CD8-positive, alpha-beta T cell (primary cell): ENCODE measurements at regions of chr12 and their contacts with region 1.

Region 1: GRCh38 chr12:120971299-120972179 is 6.8 kb upstream of the HNF1A start:
- DNase-seq: peak in 7 of 9 experiments; percentile 11 to 78 (median 27)
- ATAC-seq: peak; percentile 95
- H3K4me3 ChIP-seq: no peak overlapping the region
- H3K4me3 Mint-ChIP-seq: no peak overlapping the region
- H3K27ac ChIP-seq: no peak overlapping the region
- H3K27ac Mint-ChIP-seq: no peak overlapping the region
- H3K4me1 ChIP-seq: no peaks in the 10 kb centered on the region
- H3K4me1 Mint-ChIP-seq: peaks cover 5% of the 10 kb centered on the region
- H3K27me3 ChIP-seq: no peaks in the 10 kb centered on the region
- H3K27me3 Mint-ChIP-seq: no peaks in the 10 kb centered on the region
- CTCF ChIP-seq: peak; percentile 69

Region 2: GRCh38 chr12:120356567-120357030 is 614.9 kb before region 1 on chr12:
- CTCF ChIA-PET with region 1: interaction called, 3 read pairs
- POLR2A ChIA-PET with region 1: no interaction called
- intact Hi-C with region 1: loop called in 1 of 2 experiments (anchors 10 kb)
- DNase-seq: peak; percentile 39 to 83 (median 75)
- ATAC-seq: peak; percentile 96
- H3K4me3 ChIP-seq: no peak overlapping the region
- H3K4me3 Mint-ChIP-seq: no peak overlapping the region
- H3K27ac ChIP-seq: no peak overlapping the region
- H3K27ac Mint-ChIP-seq: no peak overlapping the region
- H3K4me1 ChIP-seq: no peaks in the 10 kb centered on the region
- H3K4me1 Mint-ChIP-seq: peaks cover 2% of the 10 kb centered on the region
- H3K27me3 ChIP-seq: peaks cover 0 to 2% of the 10 kb centered on the region in 2 experiments
- H3K27me3 Mint-ChIP-seq: peaks cover 32% of the 10 kb centered on the region
- CTCF ChIP-seq: peak; percentile 89

Region 3: GRCh38 chr12:120710031-120710804 is 261.3 kb before region 1 on chr12 and contains the start of gene UNC119B:
- CTCF ChIA-PET with region 1: interaction called, 3 read pairs
- POLR2A ChIA-PET with region 1: no interaction called
- intact Hi-C with region 1: loop called in 1 of 2 experiments (anchors 5 kb)
- DNase-seq: peak; percentile 38 to 85 (median 77)
- ATAC-seq: peak; percentile 88
- H3K4me3 ChIP-seq: peak within 1 kb of the TSS; percentile 64 to 68
- H3K4me3 Mint-ChIP-seq: peak within 1 kb of the TSS; percentile 93
- H3K27ac ChIP-seq: peak within 1 kb of the TSS; percentile 40 to 70
- H3K27ac Mint-ChIP-seq: peak within 1 kb of the TSS; percentile 89
- H3K4me1 ChIP-seq: peaks cover 22% of the 10 kb centered on the region
- H3K4me1 Mint-ChIP-seq: peaks cover 37% of the 10 kb centered on the region
- H3K27me3 ChIP-seq: no peaks in the 10 kb centered on the region
- H3K27me3 Mint-ChIP-seq: no peaks in the 10 kb centered on the region
- CTCF ChIP-seq: no peak
- total RNA-seq, gene UNC119B: 8.1 to 8.4 TPM

Region 4: DNA sequence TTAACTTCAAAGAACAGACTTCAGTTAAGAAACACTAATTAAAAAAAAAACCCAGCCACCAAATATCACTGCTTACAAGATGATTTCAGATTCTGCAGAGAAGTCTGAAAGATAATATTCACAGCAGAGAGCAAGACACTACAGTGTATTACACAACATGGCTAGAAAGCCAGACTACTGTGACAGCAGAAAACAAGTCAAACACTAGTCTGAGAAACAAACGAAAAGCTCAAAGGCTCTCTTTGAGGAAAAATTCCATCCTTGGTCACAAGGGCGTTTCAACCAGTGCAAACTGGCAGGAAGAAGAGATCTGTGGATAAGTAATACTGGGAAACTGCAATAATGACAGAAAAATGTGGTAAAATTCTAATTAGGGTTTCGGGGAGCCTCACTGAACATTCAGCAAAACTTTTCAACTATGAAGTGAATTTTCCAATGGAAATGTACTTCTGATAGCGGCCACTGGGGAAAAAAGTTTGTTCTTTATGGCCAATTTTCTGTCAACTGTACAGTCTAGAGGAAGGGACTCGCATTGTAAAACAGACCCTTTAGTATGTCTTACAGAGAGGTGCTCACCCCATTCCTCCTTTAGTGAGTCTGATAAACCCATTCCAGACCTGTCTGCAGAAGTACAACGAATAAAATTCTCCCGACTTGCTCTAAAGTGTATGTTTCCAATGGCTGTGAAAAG is 195.5 kb before region 1 on chr12:
- CTCF ChIA-PET with region 1: interaction called, 3 read pairs
- POLR2A ChIA-PET with region 1: no interaction called
- intact Hi-C with region 1: loop called in 1 of 2 experiments (anchors 10 kb)
- DNase-seq: no peak
- ATAC-seq: no peak
- H3K4me3 ChIP-seq: no peak overlapping the region
- H3K4me3 Mint-ChIP-seq: no peak overlapping the region
- H3K27ac ChIP-seq: no peak overlapping the region
- H3K27ac Mint-ChIP-seq: peak overlapping the region; percentile 3
- H3K4me1 ChIP-seq: no peaks in the 10 kb centered on the region
- H3K4me1 Mint-ChIP-seq: peaks cover 18% of the 10 kb centered on the region
- H3K27me3 ChIP-seq: no peaks in the 10 kb centered on the region
- H3K27me3 Mint-ChIP-seq: no peaks in the 10 kb centered on the region
- CTCF ChIP-seq: no peak

Region 5: DNA sequence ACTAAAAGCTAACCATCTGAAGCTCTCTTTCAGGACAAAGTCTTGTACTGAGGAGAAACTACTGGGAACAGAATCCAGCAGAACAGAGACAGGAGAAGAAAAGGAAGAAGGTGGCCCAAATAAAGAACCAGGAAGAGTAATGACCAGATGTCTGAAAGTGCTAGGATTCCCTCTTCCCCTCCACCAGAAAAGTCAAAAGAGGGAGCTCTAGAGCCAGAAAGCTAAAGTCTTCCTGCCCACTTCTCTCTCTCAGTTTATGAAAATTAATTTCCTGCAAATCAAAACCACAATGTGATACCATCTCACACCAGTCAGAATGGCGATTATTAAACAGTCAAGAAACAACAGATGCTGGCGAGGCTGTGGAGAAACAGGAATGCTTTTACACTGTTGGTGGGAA is 114.6 kb before region 1 on chr12:
- CTCF ChIA-PET with region 1: interaction called, 12 read pairs
- POLR2A ChIA-PET with region 1: no interaction called
- intact Hi-C with region 1: loop called (anchors 1 to 5 kb)
- DNase-seq: peak in 2 of 9 experiments; percentile 32 to 55
- ATAC-seq: no peak
- H3K4me3 ChIP-seq: no peak overlapping the region
- H3K4me3 Mint-ChIP-seq: no peak overlapping the region
- H3K27ac ChIP-seq: no peak overlapping the region
- H3K27ac Mint-ChIP-seq: peak overlapping the region; percentile 56
- H3K4me1 ChIP-seq: peaks cover 26% of the 10 kb centered on the region
- H3K4me1 Mint-ChIP-seq: peaks cover 63% of the 10 kb centered on the region
- H3K27me3 ChIP-seq: no peaks in the 10 kb centered on the region
- H3K27me3 Mint-ChIP-seq: no peaks in the 10 kb centered on the region
- CTCF ChIP-seq: no peak

Region 6: GRCh38 chr12:120944645-120945231 is 26.8 kb before region 1 on chr12:
- CTCF ChIA-PET with region 1: interaction called, 19 read pairs
- POLR2A ChIA-PET with region 1: no interaction called
- intact Hi-C with region 1: loop called (anchors 1 kb)
- DNase-seq: peak; percentile 21 to 75 (median 65)
- ATAC-seq: peak; percentile 69
- H3K4me3 ChIP-seq: no peak overlapping the region
- H3K4me3 Mint-ChIP-seq: no peak overlapping the region
- H3K27ac ChIP-seq: no peak overlapping the region
- H3K27ac Mint-ChIP-seq: no peak overlapping the region
- H3K4me1 ChIP-seq: no peaks in the 10 kb centered on the region
- H3K4me1 Mint-ChIP-seq: peaks cover 4% of the 10 kb centered on the region
- H3K27me3 ChIP-seq: no peaks in the 10 kb centered on the region
- H3K27me3 Mint-ChIP-seq: no peaks in the 10 kb centered on the region
- CTCF ChIP-seq: peak; percentile 80

Region 7: DNA sequence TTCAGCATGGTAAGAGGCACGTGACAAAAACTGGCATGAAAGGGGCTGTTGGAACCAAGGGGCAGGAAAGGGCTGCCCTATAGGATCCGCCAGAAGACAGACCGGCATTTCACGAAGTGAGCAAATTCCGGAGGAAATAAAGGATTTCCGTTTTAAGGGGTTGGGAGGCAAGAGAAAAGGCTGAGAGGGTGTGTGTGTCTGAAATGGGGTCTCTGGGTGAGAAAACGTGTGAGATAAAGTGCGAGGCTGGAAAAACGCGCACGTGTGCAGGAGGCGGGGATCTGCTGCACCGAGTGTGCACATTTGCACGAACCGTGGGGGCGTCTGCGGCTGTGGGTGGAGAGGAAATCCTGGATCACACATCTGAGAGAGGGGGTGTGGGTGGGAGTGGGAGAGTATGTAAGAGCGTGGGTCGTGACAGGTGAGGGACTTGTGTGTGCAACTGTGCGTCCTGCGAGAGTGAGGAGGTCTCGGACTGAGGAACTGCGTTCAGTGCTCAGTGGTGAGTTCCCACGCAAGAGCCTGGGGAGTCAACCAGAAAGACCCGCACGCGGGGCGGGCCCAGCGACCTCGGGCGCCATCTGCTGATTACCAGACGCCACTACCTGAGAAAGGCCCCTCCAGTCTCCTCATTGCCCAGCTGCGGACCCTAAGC is 124.1 kb after region 1 on chr12:
- CTCF ChIA-PET with region 1: no interaction called
- POLR2A ChIA-PET with region 1: no interaction called
- intact Hi-C with region 1: loop called in 1 of 2 experiments (anchors 1 kb)
- DNase-seq: peak; percentile 59 to 88 (median 81)
- ATAC-seq: peak; percentile 78
- H3K4me3 ChIP-seq: peak overlapping the region; percentile 44 to 47
- H3K4me3 Mint-ChIP-seq: peak overlapping the region; percentile 81
- H3K27ac ChIP-seq: no peak overlapping the region
- H3K27ac Mint-ChIP-seq: no peak overlapping the region
- H3K4me1 ChIP-seq: peaks cover 47% of the 10 kb centered on the region
- H3K4me1 Mint-ChIP-seq: peaks cover 49% of the 10 kb centered on the region
- H3K27me3 ChIP-seq: no peaks in the 10 kb centered on the region
- H3K27me3 Mint-ChIP-seq: no peaks in the 10 kb centered on the region
- CTCF ChIP-seq: peak; percentile 81

Region 8: DNA sequence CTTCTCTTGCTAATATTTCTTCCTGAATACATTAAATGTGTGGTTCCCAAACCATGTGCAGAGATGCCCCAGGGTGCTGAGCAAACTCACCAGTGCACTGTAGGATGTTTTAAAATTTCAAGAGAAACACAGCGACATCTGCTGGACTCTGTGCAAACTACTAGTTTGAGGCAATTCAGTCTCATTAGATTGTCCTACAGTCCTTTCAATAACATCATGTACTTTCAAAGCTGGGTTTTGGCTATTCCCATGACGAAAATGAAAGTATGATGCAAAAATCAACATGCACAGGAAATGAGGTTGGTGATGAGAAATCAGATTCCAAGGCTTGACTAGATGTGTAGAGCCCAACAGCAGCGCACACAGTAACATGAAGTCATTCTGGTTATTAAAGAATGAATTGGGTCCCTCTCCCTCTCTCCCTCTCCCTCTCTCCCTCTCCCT is 1384.7 kb after region 1 on chr12:
- CTCF ChIA-PET with region 1: no interaction called
- POLR2A ChIA-PET with region 1: no interaction called
- intact Hi-C with region 1: no loop called
- DNase-seq: peak; percentile 10 to 64 (median 53)
- ATAC-seq: peak; percentile 85
- H3K4me3 ChIP-seq: no peak overlapping the region
- H3K4me3 Mint-ChIP-seq: no peak overlapping the region
- H3K27ac ChIP-seq: no peak overlapping the region
- H3K27ac Mint-ChIP-seq: no peak overlapping the region
- H3K4me1 ChIP-seq: no peaks in the 10 kb centered on the region
- H3K4me1 Mint-ChIP-seq: peaks cover 5% of the 10 kb centered on the region
- H3K27me3 ChIP-seq: no peaks in the 10 kb centered on the region
- H3K27me3 Mint-ChIP-seq: no peaks in the 10 kb centered on the region
- CTCF ChIP-seq: peak; percentile 90